Activated CD4-positive, alpha-beta T cell treated with anti-CD3 and anti-CD28 coated beads for 36 hours (primary cell): ENCODE measurements at regions of chr22 and their contacts with region 1.

Region 1: DNA sequence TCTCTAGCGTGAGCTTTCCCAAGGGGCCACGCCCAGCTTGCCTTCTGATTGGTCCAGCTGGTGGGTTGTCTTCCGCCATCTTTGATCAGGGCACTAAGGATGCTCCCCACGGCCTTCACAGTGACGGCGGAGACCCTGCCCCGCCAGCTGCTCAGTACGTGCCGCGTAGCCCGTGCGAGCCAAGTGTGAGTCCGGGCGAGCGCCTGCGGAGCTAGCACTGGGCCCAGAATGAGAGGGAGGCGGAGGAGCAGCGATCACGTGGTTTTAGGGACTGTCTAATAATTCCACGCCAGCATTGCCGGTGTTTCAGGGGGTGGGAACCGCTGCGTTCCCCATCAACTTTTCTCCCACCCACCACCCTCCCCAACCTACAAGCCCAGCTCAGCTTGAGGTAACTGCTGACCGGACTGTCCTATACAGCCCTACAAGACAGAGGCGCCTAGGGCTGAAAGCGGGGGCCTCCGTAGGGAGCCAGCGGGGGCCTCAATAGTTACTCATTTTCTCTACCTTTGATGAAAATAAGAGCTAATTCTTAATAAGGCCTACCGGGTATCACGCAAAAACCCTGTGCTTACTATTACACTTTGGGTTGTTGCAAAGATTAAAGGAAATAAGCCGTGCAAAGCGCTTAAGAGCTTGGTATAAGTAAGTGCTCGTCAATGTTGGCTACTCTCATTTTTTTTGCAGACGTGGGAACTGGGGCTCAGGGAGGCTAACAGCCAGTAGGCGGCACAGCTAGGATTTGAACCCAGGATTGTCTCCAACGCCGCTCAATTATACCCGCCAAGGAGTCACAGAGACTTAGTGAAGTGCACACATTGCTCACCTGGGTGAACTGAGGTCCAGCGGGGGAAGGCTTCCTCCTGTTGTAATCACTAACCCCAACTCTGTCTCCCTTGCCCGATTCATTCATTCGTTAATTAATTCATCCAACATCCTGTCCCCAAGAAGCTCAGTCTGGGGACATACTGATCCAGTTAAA is 1.3 kb upstream of the MTFP1 start:
- DNase-seq: peak; percentile 99
- ATAC-seq: peak; percentile 85
- H3K4me3 Mint-ChIP-seq: peak overlapping the region; percentile 93
- H3K27ac Mint-ChIP-seq: peak overlapping the region; percentile 97
- H3K4me1 Mint-ChIP-seq: peaks cover 49% of the 10 kb centered on the region
- H3K27me3 Mint-ChIP-seq: no peaks in the 10 kb centered on the region

Region 2: GRCh38 chr22:29766632-29767170 is 657.6 kb before region 1 on chr22 and contains the start of gene ZMAT5:
- CTCF ChIA-PET with region 1: no interaction called
- POLR2A ChIA-PET with region 1: no interaction called
- intact Hi-C with region 1: loop called in 1 of 2 experiments (anchors 1 kb)
- DNase-seq: peak; percentile 96
- ATAC-seq: peak; percentile 97
- H3K4me3 Mint-ChIP-seq: peak within 1 kb of the TSS; percentile 99
- H3K27ac Mint-ChIP-seq: peak within 1 kb of the TSS; percentile 98
- H3K4me1 Mint-ChIP-seq: peaks cover 31% of the 10 kb centered on the region
- H3K27me3 Mint-ChIP-seq: no peaks in the 10 kb centered on the region
- total RNA-seq, gene ZMAT5: 19.2 to 25.1 TPM

Region 3: DNA sequence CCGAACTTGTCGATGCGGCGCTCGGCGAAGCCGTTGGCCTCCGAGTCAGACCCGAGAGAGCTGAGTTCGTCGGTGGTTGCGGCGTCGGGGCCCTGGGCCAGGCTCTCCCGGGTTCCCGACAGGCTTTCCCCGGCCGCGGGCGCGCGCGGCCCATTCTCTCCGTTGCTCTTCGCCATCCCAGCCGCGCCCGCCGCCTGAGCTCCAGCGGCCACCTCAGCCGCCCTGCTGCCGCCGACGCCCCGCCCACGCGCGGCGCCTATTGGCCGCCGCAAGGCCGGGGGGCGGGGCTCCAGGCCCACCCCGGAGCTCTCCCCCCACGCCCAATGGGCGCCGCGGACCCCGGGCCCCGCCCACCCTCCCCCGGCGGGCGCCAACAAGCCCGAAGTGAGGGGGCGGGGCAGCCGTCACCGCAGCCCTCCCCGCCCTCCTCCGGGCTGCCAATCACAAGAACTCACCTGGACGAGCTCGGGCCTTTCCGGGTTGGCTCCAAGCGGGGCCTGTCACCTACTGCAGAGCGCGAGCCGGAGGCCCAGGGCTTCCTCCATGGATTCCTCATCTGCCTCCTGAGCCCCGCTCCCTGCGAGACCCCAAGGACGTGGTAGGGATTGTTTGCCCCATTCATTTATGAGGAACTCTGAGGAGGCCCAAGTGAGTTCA is 97.4 kb before region 1 on chr22 and contains the start of gene TBC1D10A:
- CTCF ChIA-PET with region 1: interaction called, 4 read pairs
- POLR2A ChIA-PET with region 1: interaction called, 4 read pairs
- intact Hi-C with region 1: loop called in 1 of 2 experiments (anchors 1 kb)
- DNase-seq: peak; percentile 97
- ATAC-seq: peak; percentile 87
- H3K4me3 Mint-ChIP-seq: peak within 1 kb of the TSS; percentile 82
- H3K27ac Mint-ChIP-seq: peak within 1 kb of the TSS; percentile 89
- H3K4me1 Mint-ChIP-seq: peaks cover 45% of the 10 kb centered on the region
- H3K27me3 Mint-ChIP-seq: no peaks in the 10 kb centered on the region
- total RNA-seq, gene TBC1D10A: 20.1 to 21.6 TPM

Region 4: DNA sequence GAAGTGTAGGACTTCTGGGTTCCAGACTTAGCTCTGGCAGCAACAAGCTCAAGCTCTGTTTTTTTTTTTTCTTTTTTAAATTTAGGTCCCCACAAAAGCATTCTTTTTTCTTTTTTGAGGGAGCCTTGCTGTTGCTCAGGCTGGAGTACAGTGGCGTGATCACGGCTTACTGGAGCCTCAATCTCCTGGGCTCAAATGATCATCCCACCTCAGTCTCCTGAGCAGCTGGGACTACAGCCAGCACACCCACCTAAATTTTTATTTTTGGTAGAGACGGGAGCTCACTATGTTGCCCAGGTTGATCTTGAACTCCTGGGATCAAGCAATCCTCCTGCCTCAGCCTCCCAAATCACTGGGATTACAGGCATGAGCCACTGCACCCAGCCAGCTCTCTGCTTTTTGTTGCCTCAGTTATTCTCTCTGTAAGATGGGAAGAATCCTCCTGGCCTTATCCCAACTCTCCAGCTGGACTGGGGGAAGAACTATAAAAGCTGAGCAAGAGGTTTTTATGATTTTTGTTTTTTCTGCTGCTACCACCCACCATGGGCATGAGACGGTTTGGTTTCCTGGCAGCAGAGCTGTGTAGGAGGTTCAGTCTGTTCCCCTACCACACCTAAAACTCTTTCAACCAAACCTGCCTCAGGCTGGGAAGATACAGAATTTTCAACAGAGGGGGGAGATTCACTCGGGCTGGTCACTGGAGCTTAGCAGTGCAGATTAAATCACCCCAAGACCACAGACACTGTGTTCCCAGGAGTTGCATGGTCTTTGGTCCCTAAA is 10.3 kb before region 1 on chr22:
- CTCF ChIA-PET with region 1: interaction called, 13 read pairs
- POLR2A ChIA-PET with region 1: interaction called, 10 read pairs
- intact Hi-C with region 1: no loop called
- DNase-seq: peak; percentile 48
- ATAC-seq: peak; percentile 61
- H3K4me3 Mint-ChIP-seq: no peak overlapping the region
- H3K27ac Mint-ChIP-seq: peak overlapping the region; percentile 79
- H3K4me1 Mint-ChIP-seq: peaks cover 47% of the 10 kb centered on the region
- H3K27me3 Mint-ChIP-seq: no peaks in the 10 kb centered on the region

Region 5: DNA sequence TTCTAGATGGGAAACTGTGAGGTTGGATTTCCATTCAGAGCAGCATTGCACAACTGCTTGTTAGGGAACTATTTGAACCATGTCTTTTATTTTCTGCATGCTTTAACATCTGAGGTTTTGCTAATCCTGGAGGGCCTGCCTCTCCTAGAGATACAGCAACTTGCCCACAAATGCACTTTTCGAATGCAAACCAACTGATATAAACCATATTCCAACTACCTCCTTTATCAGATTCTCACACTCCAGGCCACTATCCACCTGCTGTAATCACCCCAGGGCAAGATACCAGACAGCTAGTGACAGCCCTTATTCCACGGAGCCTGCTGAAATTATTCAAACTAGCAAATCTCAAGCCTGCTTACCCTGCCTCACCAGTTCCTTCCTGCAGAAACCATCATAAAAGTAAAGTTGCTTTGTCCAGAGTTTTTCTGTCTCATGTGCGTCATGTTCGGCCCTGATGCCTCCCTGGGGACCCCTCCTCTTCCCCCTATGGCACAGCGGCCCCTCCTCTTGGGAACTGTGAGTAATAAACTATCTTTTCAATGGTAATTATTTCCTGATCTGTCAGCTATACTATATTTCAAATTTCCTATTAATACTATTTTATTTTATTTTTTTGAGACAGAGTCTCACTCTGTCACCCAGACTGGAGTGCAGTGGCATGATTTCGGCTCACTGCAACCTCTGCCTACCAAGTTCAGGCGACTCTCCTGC is 99.7 kb after region 1 on chr22:
- CTCF ChIA-PET with region 1: no interaction called
- POLR2A ChIA-PET with region 1: no interaction called
- intact Hi-C with region 1: no loop called
- DNase-seq: no peak
- ATAC-seq: no peak
- H3K4me3 Mint-ChIP-seq: no peak overlapping the region
- H3K27ac Mint-ChIP-seq: no peak overlapping the region
- H3K4me1 Mint-ChIP-seq: no peaks in the 10 kb centered on the region
- H3K27me3 Mint-ChIP-seq: peaks cover 2% of the 10 kb centered on the region

Region 6: GRCh38 chr22:30634471-30635233 is 210.4 kb after region 1 on chr22:
- CTCF ChIA-PET with region 1: interaction called, 4 read pairs
- POLR2A ChIA-PET with region 1: no interaction called
- intact Hi-C with region 1: loop called in 1 of 2 experiments (anchors 1 kb)
- DNase-seq: peak; percentile 95
- ATAC-seq: peak; percentile 77
- H3K4me3 Mint-ChIP-seq: peak overlapping the region; percentile 75
- H3K27ac Mint-ChIP-seq: peak overlapping the region; percentile 84
- H3K4me1 Mint-ChIP-seq: peaks cover 22% of the 10 kb centered on the region
- H3K27me3 Mint-ChIP-seq: no peaks in the 10 kb centered on the region

Region 7: GRCh38 chr22:31080848-31081649 is 656.8 kb after region 1 on chr22 and contains the start of gene SMTN:
- CTCF ChIA-PET with region 1: no interaction called
- POLR2A ChIA-PET with region 1: no interaction called
- intact Hi-C with region 1: loop called in 1 of 2 experiments (anchors 5 kb)
- DNase-seq: peak; percentile 92
- ATAC-seq: peak; percentile 67
- H3K4me3 Mint-ChIP-seq: peak within 1 kb of the TSS; percentile 82
- H3K27ac Mint-ChIP-seq: peak within 1 kb of the TSS; percentile 63
- H3K4me1 Mint-ChIP-seq: peaks cover 30% of the 10 kb centered on the region
- H3K27me3 Mint-ChIP-seq: no peaks in the 10 kb centered on the region
- total RNA-seq, gene SMTN: 40.1 to 45.8 TPM